ENCODE measurements at regions of chr4 and their contacts with region 1.

Region 1: DNA sequence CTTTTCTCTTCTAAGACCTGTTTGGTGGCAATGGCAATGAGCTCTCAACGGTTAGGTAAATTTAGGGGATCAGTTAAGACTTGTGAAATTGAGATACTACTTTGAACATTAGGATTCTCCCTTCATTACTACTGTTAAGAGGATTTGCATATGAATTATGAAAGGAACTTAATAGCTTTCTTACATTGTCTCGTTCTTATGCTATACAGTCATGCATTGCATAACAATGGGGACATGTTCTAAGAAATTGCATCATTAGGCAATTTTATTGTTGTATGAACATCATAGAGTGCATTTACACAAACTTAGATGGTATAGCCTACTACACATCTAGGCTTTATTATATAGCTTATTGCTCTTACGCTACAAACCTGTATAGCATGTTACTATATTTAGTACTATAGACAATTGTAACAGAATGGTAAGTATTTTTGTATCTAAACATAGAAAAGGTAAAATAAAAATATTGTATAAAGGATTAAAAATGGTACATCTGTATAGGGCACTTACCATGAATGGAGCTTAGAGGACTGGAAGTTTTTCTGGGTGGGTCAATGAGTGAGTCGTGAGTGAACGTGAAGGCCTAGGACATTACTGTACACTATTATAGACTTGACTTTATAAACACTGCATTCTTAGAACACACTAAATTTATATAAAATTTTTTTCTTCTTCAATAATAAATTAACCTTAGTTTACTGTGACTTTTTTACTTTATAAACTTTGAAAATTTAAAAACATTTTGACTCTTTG is 62.5 kb downstream of the PAQR3 start:
- DNase-seq: no peak
- CTCF ChIP-seq: no peak

Region 2: GRCh38 chr4:78312989-78313753 is 563.6 kb before region 1 on chr4:
- in situ Hi-C with region 1: no loop called
- DNase-seq: no peak
- CTCF ChIP-seq: no peak

Region 3: GRCh38 chr4:78601013-78601412 is 275.7 kb before region 1 on chr4:
- in situ Hi-C with region 1: loop called (anchors 10 kb)
- DNase-seq: peak; percentile 23
- CTCF ChIP-seq: no peak

Region 4: DNA sequence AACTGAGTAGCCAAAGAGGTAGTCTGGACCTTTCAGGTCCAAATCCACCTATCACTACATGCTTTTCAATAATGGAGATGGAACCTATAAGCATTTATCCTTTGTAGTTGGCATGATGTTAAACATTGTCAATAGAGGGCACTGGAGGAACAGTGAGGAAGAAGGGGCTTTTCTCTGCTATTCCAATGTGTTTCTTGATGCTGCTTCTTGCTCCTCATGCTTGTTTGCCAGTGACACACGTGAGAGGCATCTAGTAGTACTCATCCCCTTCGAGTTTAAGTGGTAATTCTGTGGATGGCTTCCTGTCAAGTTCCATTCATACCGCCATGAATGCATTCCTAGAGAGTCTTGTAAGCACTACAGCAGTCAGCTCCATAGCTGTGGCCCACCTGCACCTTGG is 365.1 kb after region 1 on chr4:
- in situ Hi-C with region 1: no loop called
- DNase-seq: no peak
- CTCF ChIP-seq: peak; percentile 45